ENCODE measurements at regions of chr3 and their contacts with region 1.

Region 1: DNA sequence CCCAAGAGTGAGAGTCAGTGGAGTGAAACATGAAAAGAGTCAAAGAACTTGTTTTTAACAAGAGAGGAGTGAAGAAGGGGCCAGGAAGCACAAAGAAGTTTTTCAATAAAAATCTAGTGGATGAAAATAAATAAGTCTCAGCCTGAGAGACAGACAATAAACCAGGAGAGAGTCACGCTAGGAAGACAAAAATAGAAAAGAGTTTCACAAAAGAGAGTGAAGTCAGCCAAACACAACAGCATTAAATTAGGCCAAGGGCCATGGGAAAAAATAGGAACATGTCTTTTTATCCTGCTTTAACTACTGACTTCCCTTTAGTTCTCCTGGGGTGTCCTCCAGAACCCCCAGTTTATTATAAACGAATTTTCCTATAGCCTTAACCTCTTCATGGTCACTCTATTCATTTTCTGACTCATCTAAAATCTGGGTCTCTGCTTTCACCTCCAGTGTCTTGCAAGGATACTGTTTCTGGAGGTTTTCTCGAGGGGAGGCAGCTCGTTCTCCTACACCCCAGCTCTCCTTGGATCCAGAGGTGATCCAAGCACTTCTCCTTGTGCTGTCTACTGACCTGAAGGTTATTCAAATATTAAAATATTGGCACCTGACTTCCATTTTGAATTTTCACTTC is 571.5 kb upstream of the PPP2R3A start:
- DNase-seq: no peak
- ATAC-seq: peak; percentile 90 to 91
- H3K4me3 ChIP-seq: no peak overlapping the region
- H3K27ac ChIP-seq: peak overlapping the region; percentile 44 to 75 (median 66)
- H3K4me1 ChIP-seq: peaks cover 6 to 17% of the 10 kb centered on the region in 2 donors
- H3K27me3 ChIP-seq: no peaks in the 10 kb centered on the region
- CTCF ChIP-seq: no peak
- POLR2A ChIP-seq: no peak

Region 2: DNA sequence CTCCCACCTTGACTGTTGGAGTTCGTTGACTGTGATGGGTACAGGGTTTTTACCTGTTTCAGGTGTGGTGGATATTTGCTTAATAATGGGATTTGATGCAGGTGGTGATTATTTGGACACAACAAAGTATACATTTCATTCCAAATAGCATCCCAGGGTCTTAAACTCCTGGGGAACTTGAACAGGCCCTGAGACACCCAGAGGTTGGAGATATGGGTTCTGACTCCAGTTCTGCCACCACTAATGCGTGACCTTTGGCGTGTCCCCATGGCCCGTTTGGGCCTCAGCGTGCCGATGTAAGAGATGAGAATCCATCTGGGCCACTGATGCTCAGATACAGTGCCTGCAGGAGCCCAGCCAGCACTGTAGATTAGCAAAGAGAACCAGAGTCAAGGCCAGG is 334.4 kb before region 1 on chr3:
- in situ Hi-C with region 1: no loop called
- intact Hi-C with region 1: no loop called
- DNase-seq: no peak
- ATAC-seq: no peak
- H3K4me3 ChIP-seq: no peak overlapping the region
- H3K27ac ChIP-seq: no peak overlapping the region
- H3K4me1 ChIP-seq: no peaks in the 10 kb centered on the region
- H3K27me3 ChIP-seq: no peaks in the 10 kb centered on the region
- CTCF ChIP-seq: no peak
- POLR2A ChIP-seq: no peak

Region 3: GRCh38 chr3:135337192-135337591 is 56.8 kb before region 1 on chr3:
- in situ Hi-C with region 1: no loop called
- intact Hi-C with region 1: loop called (anchors 10 kb)
- DNase-seq: peak; percentile 17 to 82
- ATAC-seq: peak; percentile 80 to 100
- H3K4me3 ChIP-seq: no peak overlapping the region
- H3K27ac ChIP-seq: peak overlapping the region in 1 of 4 donors; percentile 41
- H3K4me1 ChIP-seq: peaks cover 3 to 9% of the 10 kb centered on the region in 2 donors
- H3K27me3 ChIP-seq: no peaks in the 10 kb centered on the region
- CTCF ChIP-seq: no peak
- POLR2A ChIP-seq: no peak

Measured in gastrocnemius medialis (tissue), 4 donors.